PC-9 (cell line): ENCODE measurements at regions of chr20 and their contacts with region 1.

Region 1: DNA sequence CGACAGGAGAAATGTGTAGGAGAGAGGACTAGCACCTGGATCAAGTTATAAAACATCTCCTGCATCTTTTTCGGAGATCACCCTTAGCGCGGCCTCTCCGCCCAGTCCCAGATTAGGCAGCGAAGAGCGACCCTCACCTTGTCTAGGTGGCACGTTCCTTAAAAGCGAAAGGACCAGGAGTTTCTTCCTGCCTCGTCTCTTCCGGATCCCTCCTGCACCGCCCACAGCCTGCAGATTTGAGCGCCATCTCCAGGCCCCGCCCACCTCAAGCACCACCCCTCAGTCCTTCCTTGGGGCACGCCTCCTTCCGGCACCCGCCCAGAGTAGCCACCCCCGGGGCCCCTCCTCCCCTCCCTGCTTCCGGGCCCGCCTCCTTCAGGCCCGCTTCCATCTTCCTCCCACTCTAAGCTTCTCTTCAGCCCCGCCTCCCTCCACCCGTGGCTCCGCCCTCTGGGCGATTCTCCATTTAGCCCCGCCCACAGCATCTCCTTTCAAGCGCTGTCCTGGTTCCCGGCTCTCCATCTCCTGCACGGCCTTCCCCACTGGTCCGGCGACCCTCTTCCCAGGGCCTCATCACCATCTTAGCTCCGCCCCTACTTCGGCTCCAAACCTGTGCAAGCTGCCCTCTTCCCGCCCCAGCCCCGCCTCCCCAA is 662 bp upstream of the RALY start:
- DNase-seq: peak; percentile 93 to 100
- H3K4me3 ChIP-seq: peak overlapping the region; percentile 92
- H3K27ac ChIP-seq: peak overlapping the region; percentile 86
- H3K4me1 ChIP-seq: peaks cover 28% of the 10 kb centered on the region
- H3K27me3 ChIP-seq: no peaks in the 10 kb centered on the region
- CTCF ChIP-seq: no peak

Region 2: DNA sequence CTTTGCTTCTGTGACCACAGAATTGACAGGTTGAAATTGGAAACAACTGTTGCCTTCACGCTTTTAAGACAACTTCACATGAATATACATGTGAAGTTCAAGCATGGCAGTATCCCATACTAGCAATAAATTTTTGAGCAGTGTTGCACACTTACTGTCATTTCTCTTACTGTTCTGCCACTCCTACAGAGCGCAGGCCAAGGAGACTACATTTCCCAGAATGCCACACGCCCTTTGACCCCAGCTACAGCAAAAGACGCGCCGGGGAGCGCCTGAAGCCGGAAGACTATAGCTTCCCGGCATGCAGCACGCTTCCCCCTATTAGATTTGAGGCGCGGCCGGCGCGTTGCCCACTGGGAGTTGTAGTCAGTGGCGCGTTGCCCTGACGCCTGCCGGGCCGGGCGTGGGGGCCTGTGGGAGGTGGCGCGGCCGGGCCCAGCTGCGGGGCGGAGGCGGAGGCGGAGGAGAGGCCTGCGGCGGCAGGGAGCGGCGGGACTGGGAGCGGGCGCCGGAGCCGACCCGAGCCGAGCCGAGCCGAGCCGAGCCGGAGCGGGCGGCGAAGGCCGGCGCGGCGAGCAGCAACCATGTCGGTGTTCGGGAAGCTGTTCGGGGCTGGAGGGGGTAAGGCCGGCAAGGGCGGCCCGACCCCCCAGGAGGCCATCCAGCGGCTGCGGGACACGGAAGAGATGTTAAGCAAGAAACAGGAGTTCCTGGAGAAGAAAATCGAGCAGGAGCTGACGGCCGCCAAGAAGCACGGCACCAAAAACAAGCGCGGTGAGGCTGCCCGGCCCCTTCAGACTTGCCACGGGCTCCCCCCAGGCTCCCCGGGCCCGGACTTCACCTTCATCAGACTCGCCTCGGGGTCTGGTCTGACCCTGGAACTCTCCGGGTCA is 181.9 kb before region 1 on chr20 and contains the start of gene CHMP4B:
- CTCF ChIA-PET with region 1: no interaction called
- POLR2A ChIA-PET with region 1: interaction called, 21 read pairs
- intact Hi-C with region 1: loop called (anchors 1 kb)
- DNase-seq: peak; percentile 93 to 99
- H3K4me3 ChIP-seq: peak within 1 kb of the TSS; percentile 84
- H3K27ac ChIP-seq: peak within 1 kb of the TSS; percentile 94
- H3K4me1 ChIP-seq: peaks cover 35% of the 10 kb centered on the region
- H3K27me3 ChIP-seq: no peaks in the 10 kb centered on the region
- CTCF ChIP-seq: no peak
- total RNA-seq, gene CHMP4B: 176 and 180 TPM in 2 replicates

Region 3: GRCh38 chr20:33909331-33909921 is 83.6 kb before region 1 on chr20:
- CTCF ChIA-PET with region 1: no interaction called
- POLR2A ChIA-PET with region 1: interaction called, 3 read pairs
- intact Hi-C with region 1: loop called (anchors 1 kb)
- DNase-seq: peak; percentile 68 to 94
- H3K4me3 ChIP-seq: no peak overlapping the region
- H3K27ac ChIP-seq: peak overlapping the region; percentile 56
- H3K4me1 ChIP-seq: peaks cover 35% of the 10 kb centered on the region
- H3K27me3 ChIP-seq: no peaks in the 10 kb centered on the region
- CTCF ChIP-seq: no peak

Region 4: GRCh38 chr20:34064286-34064685 is 71.2 kb after region 1 on chr20:
- CTCF ChIA-PET with region 1: no interaction called
- POLR2A ChIA-PET with region 1: interaction called, 10 read pairs
- intact Hi-C with region 1: loop called (anchors 2 kb)
- DNase-seq: no peak
- H3K4me3 ChIP-seq: no peak overlapping the region
- H3K27ac ChIP-seq: no peak overlapping the region
- H3K4me1 ChIP-seq: peaks cover 8% of the 10 kb centered on the region; the same call in 1 of the 2 replicates
- H3K27me3 ChIP-seq: no peaks in the 10 kb centered on the region
- CTCF ChIP-seq: no peak

Region 5: DNA sequence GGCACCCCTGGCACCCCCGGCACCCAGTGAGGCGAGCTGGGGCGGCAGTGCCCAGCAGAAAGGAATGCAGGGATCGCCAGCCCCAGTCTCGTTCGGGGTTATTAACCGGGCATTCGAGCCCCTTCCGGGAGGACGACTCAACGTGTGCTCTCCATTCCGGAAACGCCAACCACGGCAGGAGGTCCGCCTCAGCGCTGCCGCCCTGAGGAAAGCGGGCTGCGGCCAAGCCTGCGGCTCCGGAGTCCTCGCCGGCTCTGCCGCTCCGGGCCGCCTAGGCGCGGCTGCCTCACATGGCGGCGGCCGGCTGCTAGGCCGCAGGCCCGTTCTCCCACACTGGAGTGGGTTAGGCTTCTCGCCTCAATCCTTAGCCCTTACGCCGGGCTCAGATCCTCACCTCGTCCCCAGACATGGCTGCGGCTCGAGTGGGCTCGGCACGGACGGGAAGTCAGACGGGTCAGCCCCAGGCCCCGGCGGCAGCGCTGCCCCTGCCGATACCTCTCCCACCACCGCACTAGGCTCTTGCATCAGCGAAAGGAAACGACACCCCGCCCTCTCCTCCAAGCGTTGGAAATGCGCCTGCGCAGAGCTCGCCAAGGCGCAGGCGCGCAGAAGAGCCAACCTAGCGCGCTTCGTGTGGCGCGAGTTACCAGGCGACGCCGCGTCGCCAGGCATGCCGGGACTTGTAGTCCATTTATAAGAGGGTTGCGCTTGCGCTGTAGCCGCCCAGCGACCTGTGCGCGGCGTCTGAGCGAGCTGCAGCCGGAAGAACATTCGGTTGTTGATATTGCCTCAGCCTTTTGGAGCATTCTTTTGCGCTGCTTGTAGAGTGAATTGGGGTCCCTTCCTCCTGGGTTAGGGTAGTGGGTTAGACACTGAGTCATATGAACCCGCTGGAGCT is 118.9 kb after region 1 on chr20 and contains the start of gene EIF2S2:
- CTCF ChIA-PET with region 1: no interaction called
- POLR2A ChIA-PET with region 1: interaction called, 19 read pairs
- intact Hi-C with region 1: no loop called
- DNase-seq: peak; percentile 96 to 98
- H3K4me3 ChIP-seq: peak within 1 kb of the TSS; percentile 78
- H3K27ac ChIP-seq: peak within 1 kb of the TSS; percentile 92
- H3K4me1 ChIP-seq: peaks cover 27% of the 10 kb centered on the region
- H3K27me3 ChIP-seq: no peaks in the 10 kb centered on the region
- CTCF ChIP-seq: no peak
- total RNA-seq, gene EIF2S2: 129 and 162 TPM in 2 replicates

Region 6: GRCh38 chr20:34180460-34181120 is 187.5 kb after region 1 on chr20:
- CTCF ChIA-PET with region 1: no interaction called
- POLR2A ChIA-PET with region 1: no interaction called
- intact Hi-C with region 1: no loop called
- DNase-seq: peak; percentile 76
- H3K4me3 ChIP-seq: no peak overlapping the region
- H3K27ac ChIP-seq: peak overlapping the region; percentile 58
- H3K4me1 ChIP-seq: peaks cover 27% of the 10 kb centered on the region; the same call in 1 of the 2 replicates
- H3K27me3 ChIP-seq: peaks cover 2% of the 10 kb centered on the region; the same call in 1 of the 2 replicates
- CTCF ChIP-seq: no peak